Activated T-helper 1 cell treated with anti-CD3 and anti-CD28 coated beads, Interleukin-12 subunit alpha, Interleukin-12 subunit beta, Interleukin-2, Interleukin-4 antibody, amounts not matched to agents 30 ng/mL and 10 ng/mL and 1 ng/mL, durations not matched to agents 14 hours and 24 hours and 36 hours (primary cell): ENCODE measurements at regions of chr5 and their contacts with region 1.

Region 1: GRCh38 chr5:87195104-87195591 is 72.5 kb upstream of the RASA1 start:
- DNase-seq: no peak
- H3K4me3 Mint-ChIP-seq: no peak overlapping the region
- H3K27ac Mint-ChIP-seq: no peak overlapping the region
- H3K4me1 Mint-ChIP-seq: peaks cover 26% of the 10 kb centered on the region
- H3K27me3 Mint-ChIP-seq: no peaks in the 10 kb centered on the region

Region 2: GRCh38 chr5:87002485-87002884 is 192.7 kb before region 1 on chr5:
- intact Hi-C with region 1: no loop called
- DNase-seq: no peak
- H3K4me3 Mint-ChIP-seq: no peak overlapping the region
- H3K27ac Mint-ChIP-seq: no peak overlapping the region
- H3K4me1 Mint-ChIP-seq: no peaks in the 10 kb centered on the region
- H3K27me3 Mint-ChIP-seq: peaks cover 22% of the 10 kb centered on the region

Region 3: DNA sequence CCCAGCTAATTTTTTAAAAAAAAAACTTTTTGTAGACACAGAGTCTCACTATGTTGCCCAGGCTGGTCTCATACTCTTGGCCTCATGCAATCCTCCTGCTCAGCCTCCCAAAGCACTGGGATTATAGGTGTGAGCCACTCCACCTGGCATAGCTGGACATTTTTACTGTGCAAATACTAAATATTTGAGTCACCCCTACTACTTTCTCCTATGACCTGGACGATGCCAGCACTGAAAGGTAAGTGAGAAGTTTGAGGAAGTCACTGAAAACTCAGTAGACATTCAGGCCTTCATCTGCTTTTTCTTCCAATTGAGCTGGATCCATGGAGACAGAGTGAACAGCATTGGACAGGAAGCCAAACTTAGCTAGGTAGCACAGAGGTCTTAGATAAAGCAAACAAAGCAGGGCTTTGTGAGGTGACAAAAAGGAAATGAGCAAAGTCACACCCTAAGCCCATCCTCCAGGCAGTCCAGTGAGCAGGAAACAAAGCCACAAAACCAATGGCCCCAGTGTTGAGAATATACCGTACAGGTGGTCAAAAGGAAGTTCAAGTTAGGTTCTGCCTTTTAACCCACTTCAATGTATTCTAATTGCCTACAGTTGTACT is 120.1 kb before region 1 on chr5:
- intact Hi-C with region 1: loop called (anchors 5 kb)
- DNase-seq: peak; percentile 24
- H3K4me3 Mint-ChIP-seq: no peak overlapping the region
- H3K27ac Mint-ChIP-seq: peak overlapping the region; percentile 77
- H3K4me1 Mint-ChIP-seq: peaks cover 37% of the 10 kb centered on the region
- H3K27me3 Mint-ChIP-seq: no peaks in the 10 kb centered on the region

Region 4: DNA sequence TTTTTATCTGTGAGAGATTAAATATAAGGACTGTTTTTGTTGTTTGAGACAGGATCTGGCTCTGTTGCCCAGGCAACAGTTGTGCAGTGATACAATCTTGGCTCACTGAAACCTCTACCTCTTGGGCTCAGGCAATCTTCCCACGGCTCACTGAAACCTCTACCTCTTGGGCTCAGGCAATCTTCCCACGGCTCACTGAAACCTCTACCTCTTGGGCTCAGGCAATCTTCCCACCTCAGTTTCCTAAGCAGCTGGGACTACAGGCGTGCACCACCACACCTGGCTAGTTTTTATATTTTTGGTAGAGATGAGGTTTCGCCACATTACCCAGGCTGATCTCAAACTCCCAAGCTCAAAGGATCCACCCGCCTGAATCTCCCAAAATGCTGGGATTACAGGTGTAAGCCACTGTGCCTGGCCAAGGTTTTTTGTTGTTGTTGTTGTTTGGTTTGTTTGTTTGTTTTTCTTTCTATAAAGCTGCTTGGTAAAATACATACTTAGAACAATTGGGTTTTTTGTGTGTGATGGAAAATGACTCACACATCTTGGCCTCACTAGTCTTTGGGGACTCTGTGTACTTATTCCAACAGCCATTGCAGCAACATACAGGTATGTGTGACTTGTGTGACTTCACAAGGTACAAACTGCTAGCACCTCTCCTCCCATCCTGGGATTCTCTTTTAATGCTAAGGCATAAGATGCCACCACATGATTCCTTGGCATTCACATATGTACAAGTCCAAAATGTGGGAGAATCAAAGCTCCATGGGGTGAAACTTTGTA is 36.1 kb after region 1 on chr5:
- intact Hi-C with region 1: loop called (anchors 5 kb)
- DNase-seq: no peak
- H3K4me3 Mint-ChIP-seq: no peak overlapping the region
- H3K27ac Mint-ChIP-seq: no peak overlapping the region
- H3K4me1 Mint-ChIP-seq: peaks cover 5% of the 10 kb centered on the region
- H3K27me3 Mint-ChIP-seq: peaks cover 3% of the 10 kb centered on the region